HepG2 (cell line): ENCODE measurements at regions of chr2 and their contacts with region 1.

Region 1: GRCh38 chr2:47344890-47345589 is 57.9 kb upstream of the MSH2 start:
- DNase-seq: peak; percentile 100
- ATAC-seq: peak; percentile 98
- H3K4me3 ChIP-seq: peak overlapping the region; percentile 66 to 97 (median 70)
- H3K27ac ChIP-seq: peak overlapping the region; percentile 84
- H3K4me1 ChIP-seq: peaks cover 60% of the 10 kb centered on the region
- H3K27me3 ChIP-seq: no peaks in the 10 kb centered on the region
- CTCF ChIP-seq: 0 out of 2 replicates have a peak, but pooled peaks have one; percentile 20
- EP300 ChIP-seq: peak in 1 of 2 experiments; percentile 85; a peak in 2 of 4 replicates
- POLR2A ChIP-seq: peak; percentile 83 to 91
- RAD21 ChIP-seq: no peak

Region 2: GRCh38 chr2:47309952-47310800 is 34.9 kb before region 1 on chr2:
- CTCF ChIA-PET with region 1: no interaction called
- POLR2A ChIA-PET with region 1: interaction called, 13 read pairs
- in situ Hi-C with region 1: no loop called
- intact Hi-C with region 1: no loop called
- DNase-seq: peak; percentile 96
- ATAC-seq: peak; percentile 83
- H3K4me3 ChIP-seq: peak overlapping the region; percentile 14 to 59 (median 45)
- H3K27ac ChIP-seq: peak overlapping the region; percentile 77
- H3K4me1 ChIP-seq: peaks cover 95% of the 10 kb centered on the region
- H3K27me3 ChIP-seq: no peaks in the 10 kb centered on the region
- CTCF ChIP-seq: no peak
- EP300 ChIP-seq: peak in 1 of 2 experiments; percentile 96; a peak in 2 of 4 replicates
- POLR2A ChIP-seq: peak in 1 of 2 experiments; percentile 20; a peak in 1 of 4 replicates
- RAD21 ChIP-seq: no peak

Region 3: DNA sequence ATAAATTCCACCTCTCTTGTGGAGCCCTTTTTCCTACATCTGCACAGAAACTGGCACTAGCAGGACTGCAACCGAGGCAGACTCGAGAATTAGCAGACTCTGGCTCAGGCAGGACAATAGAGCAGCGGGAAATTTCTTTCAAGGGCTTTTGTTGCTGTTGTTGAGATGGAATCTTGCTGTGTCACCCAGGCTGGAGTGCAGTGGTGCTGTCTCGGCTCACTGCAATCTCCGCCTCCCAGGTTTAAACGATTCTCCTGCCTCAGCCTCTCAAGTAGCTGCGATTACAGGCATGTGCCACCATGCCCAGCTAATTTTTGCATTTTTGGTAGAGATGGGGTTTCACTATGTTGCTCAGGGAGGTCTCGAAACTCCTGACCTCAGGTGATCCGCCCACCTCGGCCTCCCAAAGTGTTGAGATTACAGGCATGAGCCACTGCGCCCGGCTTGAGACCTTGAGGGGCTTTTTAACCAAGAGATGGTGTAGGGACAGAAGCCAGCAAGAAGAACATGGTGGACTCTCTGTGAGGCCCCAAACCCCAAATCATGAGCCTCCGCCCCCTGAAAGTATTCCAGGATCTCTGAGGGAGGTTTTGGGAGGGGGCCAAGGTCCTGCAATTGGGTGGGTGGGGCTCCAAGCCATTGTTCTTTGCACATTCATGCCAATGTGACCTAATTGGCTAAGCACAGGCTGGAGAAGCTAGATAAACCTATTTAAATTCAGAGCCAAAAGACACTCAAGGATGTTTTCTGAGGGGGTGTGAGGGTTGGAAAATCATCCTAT is 10.5 kb before region 1 on chr2:
- CTCF ChIA-PET with region 1: interaction called, 3 read pairs
- POLR2A ChIA-PET with region 1: interaction called, 47 read pairs
- in situ Hi-C with region 1: no loop called
- intact Hi-C with region 1: loop called (anchors 1 kb)
- DNase-seq: no peak
- ATAC-seq: no peak
- H3K4me3 ChIP-seq: no peak overlapping the region
- H3K27ac ChIP-seq: no peak overlapping the region
- H3K4me1 ChIP-seq: peaks cover 19% of the 10 kb centered on the region
- H3K27me3 ChIP-seq: no peaks in the 10 kb centered on the region
- CTCF ChIP-seq: no peak
- EP300 ChIP-seq: no peak
- POLR2A ChIP-seq: no peak
- RAD21 ChIP-seq: no peak

Region 4: GRCh38 chr2:47357483-47357882 is 12.4 kb after region 1 on chr2:
- CTCF ChIA-PET with region 1: no interaction called
- POLR2A ChIA-PET with region 1: interaction called, 48 read pairs
- in situ Hi-C with region 1: no loop called
- intact Hi-C with region 1: loop called (anchors 1 kb)
- DNase-seq: peak; percentile 51
- ATAC-seq: no peak
- H3K4me3 ChIP-seq: no peak overlapping the region
- H3K27ac ChIP-seq: no peak overlapping the region
- H3K4me1 ChIP-seq: peaks cover 78% of the 10 kb centered on the region
- H3K27me3 ChIP-seq: no peaks in the 10 kb centered on the region
- CTCF ChIP-seq: no peak
- EP300 ChIP-seq: no peak
- POLR2A ChIP-seq: no peak
- RAD21 ChIP-seq: no peak

Region 5: DNA sequence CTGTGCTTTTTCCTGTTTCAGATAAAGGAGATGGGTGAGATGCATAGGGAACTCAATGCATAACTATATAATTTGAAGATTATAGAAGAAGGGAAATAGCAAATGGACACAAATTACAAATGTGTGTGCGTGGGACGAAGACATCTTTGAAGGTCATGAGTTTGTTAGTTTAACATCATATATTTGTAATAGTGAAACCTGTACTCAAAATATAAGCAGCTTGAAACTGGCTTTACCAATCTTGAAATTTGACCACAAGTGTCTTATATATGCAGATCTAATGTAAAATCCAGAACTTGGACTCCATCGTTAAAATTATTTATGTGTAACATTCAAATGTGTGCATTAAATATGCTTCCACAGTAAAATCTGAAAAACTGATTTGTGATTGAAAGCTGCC is 41.5 kb after region 1 on chr2:
- CTCF ChIA-PET with region 1: no interaction called
- POLR2A ChIA-PET with region 1: interaction called, 21 read pairs
- in situ Hi-C with region 1: no loop called
- intact Hi-C with region 1: loop called (anchors 2 kb)
- DNase-seq: no peak
- ATAC-seq: no peak
- H3K4me3 ChIP-seq: no peak overlapping the region
- H3K27ac ChIP-seq: no peak overlapping the region
- H3K4me1 ChIP-seq: peaks cover 10% of the 10 kb centered on the region
- H3K27me3 ChIP-seq: no peaks in the 10 kb centered on the region
- CTCF ChIP-seq: no peak
- EP300 ChIP-seq: no peak
- POLR2A ChIP-seq: no peak
- RAD21 ChIP-seq: no peak

Region 6: DNA sequence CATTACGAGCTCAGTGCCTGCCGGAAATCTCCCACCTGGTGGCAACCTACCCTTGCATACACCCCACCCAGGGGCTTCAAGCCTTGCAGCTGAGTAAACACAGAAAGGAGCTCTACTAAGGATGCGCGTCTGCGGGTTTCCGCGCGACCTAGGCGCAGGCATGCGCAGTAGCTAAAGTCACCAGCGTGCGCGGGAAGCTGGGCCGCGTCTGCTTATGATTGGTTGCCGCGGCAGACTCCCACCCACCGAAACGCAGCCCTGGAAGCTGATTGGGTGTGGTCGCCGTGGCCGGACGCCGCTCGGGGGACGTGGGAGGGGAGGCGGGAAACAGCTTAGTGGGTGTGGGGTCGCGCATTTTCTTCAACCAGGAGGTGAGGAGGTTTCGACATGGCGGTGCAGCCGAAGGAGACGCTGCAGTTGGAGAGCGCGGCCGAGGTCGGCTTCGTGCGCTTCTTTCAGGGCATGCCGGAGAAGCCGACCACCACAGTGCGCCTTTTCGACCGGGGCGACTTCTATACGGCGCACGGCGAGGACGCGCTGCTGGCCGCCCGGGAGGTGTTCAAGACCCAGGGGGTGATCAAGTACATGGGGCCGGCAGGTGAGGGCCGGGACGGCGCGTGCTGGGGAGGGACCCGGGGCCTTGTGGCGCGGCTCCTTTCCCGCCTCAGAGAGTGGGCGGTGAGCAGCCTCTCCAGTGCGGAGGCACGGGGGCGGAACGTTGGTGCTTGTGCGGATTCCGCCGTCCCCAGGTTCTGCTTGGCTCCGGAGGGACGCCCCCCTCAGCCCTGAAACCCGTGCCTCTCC is 58.0 kb after region 1 on chr2 and contains the start of gene MSH2:
- CTCF ChIA-PET with region 1: no interaction called
- POLR2A ChIA-PET with region 1: interaction called, 26 read pairs
- in situ Hi-C with region 1: no loop called
- intact Hi-C with region 1: no loop called
- DNase-seq: peak; percentile 88
- ATAC-seq: peak; percentile 95
- H3K4me3 ChIP-seq: peak within 1 kb of the TSS; percentile 72 to 87 (median 76)
- H3K27ac ChIP-seq: peak within 1 kb of the TSS; percentile 75
- H3K4me1 ChIP-seq: peaks cover 65% of the 10 kb centered on the region
- H3K27me3 ChIP-seq: no peaks in the 10 kb centered on the region; a peak in 1 of 5 replicates
- CTCF ChIP-seq: peak; percentile 17; the same call in 1 of the 2 replicates
- EP300 ChIP-seq: 0 out of 4 replicates have a peak, but pooled peaks of 1 of the 2 experiments have one; percentile 3
- POLR2A ChIP-seq: peak; percentile 58 to 96
- RAD21 ChIP-seq: no peak
- total RNA-seq, gene MSH2: 76.3 and 125 TPM in 2 replicates